Lower leg skin (tissue), 4 donors: ENCODE measurements at regions of chr6 and their contacts with region 1.

Region 1: GRCh38 chr6:156776840-156777576 is at the start of gene ARID1B:
- DNase-seq: peak; percentile 73 to 95
- H3K4me3 ChIP-seq: peak within 1 kb of the TSS; percentile 83
- CTCF ChIP-seq: no peak
- POLR2A ChIP-seq: peak in 1 of 2 donors; percentile 51
- total RNA-seq, gene ARID1B: 87.3 to 132 (median 102) TPM

Region 2: DNA sequence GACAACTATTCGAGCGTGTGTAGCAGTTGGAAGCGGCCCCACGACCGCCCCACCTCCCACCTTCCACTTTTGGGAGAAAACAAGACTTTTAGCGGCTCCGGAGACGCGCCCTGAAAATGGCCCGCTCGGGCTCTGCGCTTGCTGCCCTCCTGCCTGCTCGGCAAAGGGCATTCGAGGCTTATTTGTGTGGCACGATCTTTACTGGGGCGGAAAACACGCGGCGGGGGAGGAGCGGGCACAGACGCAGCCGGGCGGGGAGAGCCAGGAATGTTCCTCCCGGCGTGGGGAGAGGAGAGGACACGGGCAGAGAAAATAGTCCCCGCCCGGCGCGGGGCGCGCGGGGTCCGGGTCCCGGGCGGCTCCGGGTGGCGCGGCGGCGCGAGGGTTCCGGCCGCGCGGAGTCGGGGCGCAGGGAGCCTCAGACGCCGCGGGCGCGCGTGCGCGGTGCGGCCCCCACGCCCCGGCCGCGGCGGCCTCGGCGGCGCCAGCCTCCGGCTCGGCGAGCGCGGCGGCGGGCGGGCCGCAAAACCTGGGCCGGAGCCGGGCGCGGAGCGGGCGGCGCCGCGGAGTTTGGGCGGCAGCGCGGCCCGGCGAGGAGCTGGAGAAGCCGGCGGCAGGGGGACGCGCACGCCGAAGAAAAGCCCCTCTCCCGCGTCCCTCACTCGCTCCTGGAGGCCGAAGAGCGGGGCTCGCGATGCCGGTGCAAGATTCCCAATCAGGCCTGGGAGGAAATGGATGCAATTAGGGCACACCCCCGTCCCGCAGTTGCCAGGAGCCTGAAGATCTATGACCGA is 89.8 kb before region 1 on chr6:
- intact Hi-C with region 1: loop called (anchors 1 kb)
- DNase-seq: peak; percentile 88 to 98
- H3K4me3 ChIP-seq: peak overlapping the region; percentile 63
- CTCF ChIP-seq: no peak
- POLR2A ChIP-seq: peak in 1 of 2 donors; percentile 28

Region 3: DNA sequence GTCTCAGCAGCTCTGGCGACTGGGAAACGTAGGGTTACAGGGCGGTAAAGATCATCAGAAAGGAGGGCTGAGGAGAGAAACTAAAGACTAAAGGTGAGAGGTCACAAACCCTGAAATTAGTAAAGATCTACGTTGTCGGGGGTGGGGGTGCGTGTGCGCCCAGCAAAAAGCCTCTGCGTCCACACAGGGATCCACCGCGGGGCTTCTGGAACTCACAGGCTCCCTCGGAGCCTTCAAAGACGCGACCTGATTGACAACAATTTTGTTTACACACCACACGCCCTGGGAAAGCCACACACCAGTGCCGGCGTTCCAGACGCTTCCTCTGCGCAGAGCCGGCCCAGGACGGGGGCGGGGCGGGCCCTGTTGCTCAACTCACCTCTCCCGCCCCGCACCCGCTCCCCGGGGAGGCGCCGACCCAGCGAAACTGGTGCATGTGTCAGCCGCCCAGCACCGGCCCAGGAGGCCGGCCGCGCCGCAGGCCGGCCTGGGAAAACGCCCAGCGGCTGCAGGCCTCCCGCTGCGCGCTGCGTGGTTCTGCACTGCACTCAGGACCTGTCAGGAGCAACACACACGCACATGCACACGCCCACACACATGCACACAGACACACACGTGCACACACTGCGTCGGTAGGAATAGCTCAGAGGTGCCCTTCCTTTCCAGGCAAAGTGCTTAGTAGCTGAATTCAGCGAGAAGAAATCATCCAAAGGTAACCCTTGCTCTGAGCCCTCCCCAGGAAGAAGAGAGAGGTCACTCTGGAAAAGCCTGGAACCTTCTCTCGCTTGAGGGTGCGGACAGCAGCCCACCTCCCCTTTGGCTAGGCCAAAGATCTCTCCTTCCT is 57.1 kb before region 1 on chr6:
- intact Hi-C with region 1: loop called (anchors 5 kb)
- DNase-seq: peak; percentile 92 to 98
- H3K4me3 ChIP-seq: no peak overlapping the region
- CTCF ChIP-seq: no peak
- POLR2A ChIP-seq: no peak

Region 4: DNA sequence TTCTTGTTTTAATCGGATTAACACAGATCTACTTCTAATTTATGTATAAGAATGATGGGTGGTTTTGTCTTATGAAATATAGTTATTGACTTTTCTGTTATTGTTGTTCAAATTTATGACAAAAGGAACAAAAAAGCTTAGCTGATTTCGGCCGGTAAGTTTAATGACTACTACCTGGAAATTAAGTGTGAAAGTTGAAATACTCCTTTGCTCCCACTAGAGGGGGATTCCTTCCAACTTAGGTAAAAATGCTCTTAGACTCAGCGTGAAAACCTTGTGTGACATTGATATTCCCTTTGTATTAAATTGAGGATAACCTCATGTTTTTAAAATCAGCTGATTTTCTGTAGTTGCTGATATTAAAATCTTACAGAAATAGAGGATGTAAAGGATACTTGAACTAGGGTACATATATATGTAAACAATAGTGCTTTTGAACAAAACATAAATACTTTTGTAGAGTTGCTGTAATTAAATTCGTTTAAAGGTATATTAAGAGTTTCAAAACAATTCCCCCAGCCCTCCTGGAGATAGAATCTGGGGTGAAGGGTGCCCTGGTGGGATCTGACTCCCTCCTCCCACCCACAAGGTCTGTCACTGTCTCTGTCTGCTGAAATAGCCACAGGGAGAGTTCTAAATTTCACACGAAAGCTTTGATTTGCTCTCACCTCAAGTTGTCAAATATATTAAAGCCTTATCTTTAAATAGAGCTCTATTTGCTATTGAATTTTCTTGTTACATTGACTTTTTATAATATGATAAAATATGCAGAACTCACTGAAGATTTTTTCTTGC is 257.6 kb after region 1 on chr6:
- intact Hi-C with region 1: loop called (anchors 5 kb)
- DNase-seq: no peak
- H3K4me3 ChIP-seq: no peak overlapping the region
- CTCF ChIP-seq: no peak
- POLR2A ChIP-seq: no peak

Region 5: GRCh38 chr6:157461000-157461915 is 684.2 kb after region 1 on chr6:
- intact Hi-C with region 1: no loop called
- DNase-seq: no peak
- H3K4me3 ChIP-seq: no peak overlapping the region
- CTCF ChIP-seq: no peak
- POLR2A ChIP-seq: no peak